ENCODE measurements at regions of chr7 and their contacts with region 1.

Region 1: GRCh38 chr7:8418629-8419245 is 14.7 kb upstream of the NXPH1 start:
- DNase-seq: peak; percentile 70
- ATAC-seq: peak; percentile 94
- H3K4me3 ChIP-seq: no peak overlapping the region
- H3K27ac ChIP-seq: no peak overlapping the region
- H3K4me1 ChIP-seq: no peaks in the 10 kb centered on the region
- H3K27me3 ChIP-seq: no peaks in the 10 kb centered on the region
- CTCF ChIP-seq: peak; percentile 86

Region 2: DNA sequence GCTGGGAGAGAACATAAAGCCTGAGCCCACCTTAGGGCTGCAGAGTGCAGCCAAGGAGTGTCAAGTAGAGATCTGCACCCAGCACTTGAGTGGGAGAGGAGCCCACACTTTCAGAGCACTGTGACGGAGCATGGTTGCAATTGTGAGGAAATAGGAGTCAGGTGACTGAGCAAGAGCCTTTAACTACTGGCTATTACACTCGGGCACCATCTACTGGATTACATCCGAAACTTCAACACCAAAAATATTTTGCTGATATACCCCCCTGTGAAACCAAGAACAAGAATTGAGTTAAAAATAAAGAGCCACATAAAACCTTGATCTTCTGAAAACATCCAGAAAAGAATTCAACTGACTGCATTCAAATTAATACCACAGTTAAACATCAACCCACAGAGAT is 672.5 kb after region 1 on chr7:
- CTCF ChIA-PET with region 1: no interaction called
- POLR2A ChIA-PET with region 1: no interaction called
- intact Hi-C with region 1: loop called (anchors 1 kb)
- DNase-seq: peak; percentile 40
- ATAC-seq: peak; percentile 80
- H3K4me3 ChIP-seq: no peak overlapping the region
- H3K27ac ChIP-seq: no peak overlapping the region
- H3K4me1 ChIP-seq: no peaks in the 10 kb centered on the region
- H3K27me3 ChIP-seq: no peaks in the 10 kb centered on the region
- CTCF ChIP-seq: peak; percentile 54